Activated CD4-positive, alpha-beta memory T cell treated with anti-CD3 and anti-CD28 coated beads for 36 hours (primary cell): ENCODE measurements at regions of chr20 and their contacts with region 1.

Region 1: GRCh38 chr20:32652739-32653526 is 20.8 kb downstream of the C20orf203 start:
- DNase-seq: peak; percentile 92
- H3K4me3 Mint-ChIP-seq: no peak overlapping the region
- H3K27ac Mint-ChIP-seq: peak overlapping the region; percentile 13
- H3K4me1 Mint-ChIP-seq: peaks cover 9% of the 10 kb centered on the region
- H3K27me3 Mint-ChIP-seq: no peaks in the 10 kb centered on the region

Region 2: DNA sequence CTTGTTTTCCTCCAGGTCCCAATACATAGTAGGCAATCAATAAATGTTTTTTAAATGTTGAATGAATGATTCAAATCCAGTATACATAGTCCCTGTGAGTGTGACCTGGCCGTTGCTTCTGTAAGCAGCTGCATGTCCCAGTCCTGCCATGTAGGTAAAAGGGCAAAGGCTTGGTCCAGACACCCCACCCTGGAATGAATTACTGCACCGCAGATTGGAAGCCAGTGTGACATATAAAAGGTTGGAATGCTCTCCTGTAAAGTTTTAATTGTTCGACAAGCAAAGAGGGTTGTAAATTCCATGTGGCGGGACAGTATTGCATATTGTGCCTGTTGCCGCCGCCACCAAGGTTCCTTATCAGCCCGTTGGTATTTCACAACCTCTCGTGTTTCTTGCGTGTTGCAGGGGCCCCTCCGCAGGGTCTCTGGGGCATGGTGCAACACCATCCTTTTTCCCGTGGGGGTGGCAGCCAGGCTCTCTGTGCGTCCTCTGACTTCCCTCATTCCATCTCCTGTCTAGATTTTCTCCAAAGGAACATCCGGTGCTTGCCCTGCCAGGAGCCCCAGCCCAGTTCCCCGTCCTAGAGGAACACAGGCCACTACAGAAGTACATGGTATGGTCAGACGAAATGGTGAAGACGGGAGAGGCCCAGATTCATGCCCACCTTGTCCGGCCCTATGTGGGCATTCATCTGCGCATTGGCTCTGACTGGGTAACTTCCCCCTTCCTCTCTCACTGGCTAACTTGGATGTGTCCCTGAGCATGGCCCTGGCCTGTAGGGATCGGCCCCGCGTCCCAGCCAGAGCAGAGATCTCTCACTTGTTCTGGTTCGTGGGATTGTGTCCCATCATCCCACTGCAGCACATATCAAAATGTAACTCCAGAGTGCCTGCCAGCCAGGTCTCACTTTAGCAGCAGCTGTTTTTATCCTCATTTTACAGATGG is 424.9 kb before region 1 on chr20:
- CTCF ChIA-PET with region 1: no interaction called
- POLR2A ChIA-PET with region 1: no interaction called
- intact Hi-C with region 1: no loop called
- DNase-seq: no peak
- H3K4me3 Mint-ChIP-seq: no peak overlapping the region
- H3K27ac Mint-ChIP-seq: peak overlapping the region; percentile 42
- H3K4me1 Mint-ChIP-seq: peaks cover 35% of the 10 kb centered on the region
- H3K27me3 Mint-ChIP-seq: no peaks in the 10 kb centered on the region

Region 3: GRCh38 chr20:32465092-32465900 is 187.6 kb before region 1 on chr20:
- CTCF ChIA-PET with region 1: interaction called, 3 read pairs
- POLR2A ChIA-PET with region 1: no interaction called
- intact Hi-C with region 1: loop called (anchors 5 kb)
- DNase-seq: no peak
- H3K4me3 Mint-ChIP-seq: no peak overlapping the region
- H3K27ac Mint-ChIP-seq: no peak overlapping the region
- H3K4me1 Mint-ChIP-seq: peaks cover 2% of the 10 kb centered on the region
- H3K27me3 Mint-ChIP-seq: no peaks in the 10 kb centered on the region

Region 4: GRCh38 chr20:32516583-32517517 is 136.1 kb before region 1 on chr20:
- CTCF ChIA-PET with region 1: interaction called, 341 read pairs
- POLR2A ChIA-PET with region 1: no interaction called
- intact Hi-C with region 1: loop called (anchors 1 kb)
- DNase-seq: no peak
- H3K4me3 Mint-ChIP-seq: no peak overlapping the region
- H3K27ac Mint-ChIP-seq: no peak overlapping the region
- H3K4me1 Mint-ChIP-seq: peaks cover 40% of the 10 kb centered on the region
- H3K27me3 Mint-ChIP-seq: no peaks in the 10 kb centered on the region